ENCODE measurements at regions of chr19 and their contacts with region 1.

Region 1: GRCh38 chr19:11422163-11423021 is 3.3 kb upstream of the RGL3 start:
- DNase-seq: peak; percentile 92 to 98
- H3K4me3 ChIP-seq: peak overlapping the region; percentile 49
- H3K27ac ChIP-seq: peak overlapping the region; percentile 47
- H3K4me1 ChIP-seq: peaks cover 23% of the 10 kb centered on the region
- H3K27me3 ChIP-seq: no peaks in the 10 kb centered on the region
- CTCF ChIP-seq: no peak

Region 2: DNA sequence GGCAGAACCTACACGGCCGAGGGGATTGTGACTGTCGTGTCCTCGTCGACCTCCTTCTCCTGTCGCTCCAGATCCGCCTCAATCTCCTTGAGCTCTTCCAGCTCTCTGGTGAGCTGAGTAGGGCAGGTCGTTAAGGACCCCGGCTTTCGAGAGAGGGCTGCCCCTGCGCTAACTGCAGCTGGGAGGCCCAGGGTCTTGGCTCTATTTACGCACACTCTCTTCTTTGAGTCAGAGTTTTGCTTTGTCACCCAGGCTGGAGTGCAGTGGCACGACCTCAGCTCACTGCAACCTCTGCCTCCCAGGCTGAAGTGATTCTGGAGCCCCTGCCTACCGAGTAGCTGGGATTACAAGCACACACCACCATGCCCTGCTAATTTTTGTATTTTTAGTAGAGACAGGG is 274.4 kb before region 1 on chr19:
- CTCF ChIA-PET with region 1: no interaction called
- POLR2A ChIA-PET with region 1: no interaction called
- intact Hi-C with region 1: no loop called
- DNase-seq: peak in 1 of 2 experiments; percentile 24
- H3K4me3 ChIP-seq: no peak overlapping the region
- H3K27ac ChIP-seq: no peak overlapping the region
- H3K4me1 ChIP-seq: peaks cover 23% of the 10 kb centered on the region
- H3K27me3 ChIP-seq: no peaks in the 10 kb centered on the region
- CTCF ChIP-seq: no peak

Region 3: DNA sequence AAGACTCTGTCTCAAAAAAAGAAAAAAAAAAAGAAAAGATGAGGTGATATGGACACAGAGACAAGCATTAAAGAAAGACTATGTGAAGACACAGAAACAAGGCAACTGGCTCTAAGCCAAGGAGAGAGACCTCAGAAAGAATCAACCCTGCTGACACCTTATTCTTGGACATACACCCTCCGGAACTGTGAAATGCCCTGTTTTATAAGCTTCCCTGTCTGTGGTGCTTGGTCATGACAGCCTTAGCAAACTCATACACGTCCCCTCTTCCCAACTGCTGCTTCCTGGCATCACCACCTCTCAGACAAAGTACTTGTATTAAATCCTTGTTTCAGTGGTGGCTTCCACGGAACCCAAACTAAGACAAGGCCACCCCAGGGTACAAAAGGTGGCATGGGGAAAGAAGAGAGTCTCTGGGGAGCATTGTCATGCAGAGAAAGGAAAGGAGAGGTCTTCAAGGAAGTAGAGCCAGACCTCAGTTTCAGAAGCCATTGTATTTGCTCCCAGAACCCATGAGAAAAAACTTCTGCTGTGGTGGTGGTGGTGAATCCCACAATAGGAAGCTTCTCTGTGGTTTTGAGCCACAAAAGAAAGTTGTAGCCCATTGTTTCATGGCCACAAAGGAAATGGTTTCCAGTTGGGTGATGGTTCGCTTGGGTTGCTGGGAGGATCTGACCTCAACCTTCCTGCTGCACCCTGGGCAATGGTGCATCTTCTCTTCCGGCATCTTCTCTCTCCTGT is 142.7 kb before region 1 on chr19:
- CTCF ChIA-PET with region 1: interaction called, 10 read pairs
- POLR2A ChIA-PET with region 1: no interaction called
- intact Hi-C with region 1: no loop called
- DNase-seq: no peak
- H3K4me3 ChIP-seq: no peak overlapping the region
- H3K27ac ChIP-seq: no peak overlapping the region
- H3K4me1 ChIP-seq: no peaks in the 10 kb centered on the region
- H3K27me3 ChIP-seq: no peaks in the 10 kb centered on the region; the same call in 1 of the 2 replicates
- CTCF ChIP-seq: no peak

Region 4: GRCh38 chr19:11346092-11346940 is 76.1 kb before region 1 on chr19 and contains the starts of genes CCDC159 and TMEM205:
- CTCF ChIA-PET with region 1: interaction called, 8 read pairs
- POLR2A ChIA-PET with region 1: interaction called, 20 read pairs
- intact Hi-C with region 1: no loop called
- DNase-seq: peak; percentile 98 to 99
- H3K4me3 ChIP-seq: peak within 1 kb of the TSS; percentile 90
- H3K27ac ChIP-seq: peak within 1 kb of the TSS; percentile 67
- H3K4me1 ChIP-seq: peaks cover 36% of the 10 kb centered on the region
- H3K27me3 ChIP-seq: no peaks in the 10 kb centered on the region
- CTCF ChIP-seq: no peak
- total RNA-seq, gene CCDC159: 9.4 and 13.7 TPM in 2 replicates
- total RNA-seq, gene TMEM205: 80.3 and 90.6 TPM in 2 replicates

Region 5: GRCh38 chr19:11374433-11375142 is 47.8 kb before region 1 on chr19 and contains the start of gene SWSAP1:
- CTCF ChIA-PET with region 1: interaction called, 3 read pairs
- POLR2A ChIA-PET with region 1: interaction called, 4 read pairs
- intact Hi-C with region 1: loop called (anchors 5 kb)
- DNase-seq: peak; percentile 97 to 99
- H3K4me3 ChIP-seq: peak within 1 kb of the TSS; percentile 62
- H3K27ac ChIP-seq: peak within 1 kb of the TSS; percentile 75
- H3K4me1 ChIP-seq: peaks cover 44% of the 10 kb centered on the region
- H3K27me3 ChIP-seq: no peaks in the 10 kb centered on the region
- CTCF ChIP-seq: no peak
- total RNA-seq, gene SWSAP1: 4.6 and 4.8 TPM in 2 replicates

Region 6: DNA sequence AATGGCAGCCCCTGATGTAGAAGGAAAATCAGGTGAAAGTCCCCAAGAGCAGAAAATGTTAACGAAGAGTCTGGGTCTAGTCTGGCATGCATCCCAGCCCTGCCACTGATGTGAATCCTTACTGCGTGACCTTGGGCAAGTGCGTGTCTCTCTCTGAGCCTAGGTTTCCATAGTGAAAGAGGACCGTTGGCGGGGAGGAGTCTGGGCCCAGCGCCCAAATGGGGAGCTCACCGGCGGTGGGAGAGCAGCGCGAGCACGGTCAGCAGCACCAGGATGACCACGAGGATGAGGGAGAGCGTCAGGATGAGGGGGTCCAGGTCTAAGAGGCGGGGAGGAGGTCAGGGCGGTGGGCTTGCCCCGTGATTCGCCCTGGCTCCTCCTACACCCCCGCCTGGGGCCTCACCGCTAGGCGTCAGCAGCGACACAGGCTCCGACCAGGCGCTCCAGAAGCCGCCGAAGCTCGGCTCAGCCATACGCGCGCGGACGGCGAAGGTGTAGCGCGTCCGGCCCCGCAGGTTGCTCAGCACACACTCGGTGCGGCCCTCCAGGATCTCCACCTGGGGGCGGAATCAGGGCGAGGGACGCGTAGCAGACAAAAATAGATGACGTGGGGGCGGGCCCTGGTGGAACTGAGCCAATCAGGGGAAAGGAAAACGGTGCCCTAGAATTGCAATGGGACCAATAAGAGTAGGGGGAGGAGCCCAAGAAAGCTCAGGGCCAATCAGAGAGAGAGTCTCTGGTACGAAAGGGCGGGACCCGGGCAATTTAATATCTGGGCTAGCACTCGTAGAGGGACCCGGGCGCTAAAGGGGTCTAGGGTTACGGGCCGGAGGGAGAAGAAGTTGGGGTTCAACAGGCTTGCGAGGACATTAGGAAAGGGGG is 41.5 kb before region 1 on chr19:
- CTCF ChIA-PET with region 1: interaction called, 27 read pairs
- POLR2A ChIA-PET with region 1: interaction called, 3 read pairs
- intact Hi-C with region 1: loop called (anchors 5 kb)
- DNase-seq: peak; percentile 85 to 91
- H3K4me3 ChIP-seq: peak overlapping the region; percentile 38; the same call in 1 of the 2 replicates
- H3K27ac ChIP-seq: no peak overlapping the region
- H3K4me1 ChIP-seq: peaks cover 66% of the 10 kb centered on the region
- H3K27me3 ChIP-seq: no peaks in the 10 kb centered on the region
- CTCF ChIP-seq: peak; percentile 70

Region 7: GRCh38 chr19:11435058-11435832 is 12.9 kb after region 1 on chr19 and contains the starts of genes ODAD3 and PRKCSH:
- CTCF ChIA-PET with region 1: no interaction called
- POLR2A ChIA-PET with region 1: interaction called, 6 read pairs
- intact Hi-C with region 1: loop called (anchors 1 kb)
- DNase-seq: peak; percentile 99
- H3K4me3 ChIP-seq: peak within 1 kb of the TSS; percentile 76
- H3K27ac ChIP-seq: peak within 1 kb of the TSS; percentile 67
- H3K4me1 ChIP-seq: peaks cover 14% of the 10 kb centered on the region
- H3K27me3 ChIP-seq: no peaks in the 10 kb centered on the region
- CTCF ChIP-seq: peak; percentile 96
- total RNA-seq, gene ODAD3: 0.15 and 0.39 TPM in 2 replicates
- total RNA-seq, gene PRKCSH: 410 and 412 TPM in 2 replicates

Region 8: DNA sequence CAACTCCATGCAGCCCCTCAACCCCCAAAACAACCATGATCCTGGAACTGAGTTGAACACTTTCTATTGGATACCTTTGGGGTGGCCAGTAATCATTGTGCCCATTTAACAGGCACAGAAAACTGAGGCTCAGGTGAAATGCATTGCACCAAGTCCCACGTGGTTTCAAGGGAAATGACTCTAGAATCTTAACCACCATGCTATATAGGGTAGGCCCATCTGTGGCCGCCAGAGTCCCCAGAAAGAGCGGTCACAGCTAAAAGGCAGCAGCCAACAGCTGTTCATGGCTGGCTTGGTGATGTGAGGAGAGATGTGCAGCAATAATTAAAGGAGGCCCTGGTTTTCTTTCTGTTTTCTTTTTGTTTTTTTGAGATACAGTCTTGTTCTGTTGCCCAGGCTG is 118.8 kb after region 1 on chr19:
- CTCF ChIA-PET with region 1: no interaction called
- POLR2A ChIA-PET with region 1: interaction called, 20 read pairs
- intact Hi-C with region 1: no loop called
- DNase-seq: no peak
- H3K4me3 ChIP-seq: no peak overlapping the region
- H3K27ac ChIP-seq: no peak overlapping the region
- H3K4me1 ChIP-seq: no peaks in the 10 kb centered on the region
- H3K27me3 ChIP-seq: no peaks in the 10 kb centered on the region
- CTCF ChIP-seq: no peak

Region 9: DNA sequence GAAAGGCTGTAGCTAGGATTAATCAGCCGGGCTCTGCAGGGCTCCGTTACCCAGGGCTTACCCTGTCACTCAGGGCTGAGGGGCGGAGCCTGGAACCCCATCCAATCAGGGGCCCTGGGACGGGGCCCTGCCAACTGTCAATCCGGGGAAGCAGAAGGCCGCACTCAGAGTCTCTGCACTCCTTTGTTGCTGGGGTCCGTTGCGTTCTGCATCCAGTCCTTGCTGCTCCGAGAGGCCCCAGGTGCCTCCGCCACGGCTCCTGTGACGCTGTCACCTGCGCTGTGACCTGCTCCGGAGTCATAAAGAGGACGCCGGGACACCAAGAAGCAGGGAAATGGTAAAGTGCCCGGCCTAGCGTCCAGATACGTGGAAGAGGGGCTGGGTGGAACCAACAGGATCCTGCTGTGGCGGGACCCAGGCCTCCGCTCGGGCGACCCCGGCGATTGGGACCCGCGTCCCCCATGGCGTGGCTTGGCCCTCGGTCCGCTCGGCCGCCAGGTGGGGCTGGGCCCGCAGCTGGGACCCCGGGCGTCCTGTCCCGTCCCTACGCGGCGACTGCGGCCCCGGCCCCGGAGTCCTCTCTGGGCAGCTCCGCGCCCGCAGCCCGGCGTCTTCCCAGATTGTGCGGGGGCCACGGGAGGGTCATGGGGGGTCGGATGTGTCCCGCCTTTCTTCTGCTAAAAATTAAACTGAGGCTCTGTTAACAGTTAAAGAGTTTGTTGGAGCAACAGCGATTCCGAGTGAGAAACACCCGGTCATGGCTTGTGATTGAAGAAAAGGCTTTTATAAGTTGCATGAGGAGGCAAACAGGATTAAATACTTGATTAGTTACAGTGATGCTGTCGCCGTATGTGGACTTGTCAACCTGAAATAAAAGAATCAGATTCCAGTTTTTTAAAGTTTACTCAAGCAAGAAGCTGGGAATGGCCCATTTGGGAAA is 376.3 kb after region 1 on chr19 and contains the start of gene ZNF491:
- CTCF ChIA-PET with region 1: no interaction called
- POLR2A ChIA-PET with region 1: no interaction called
- intact Hi-C with region 1: no loop called
- DNase-seq: peak in 1 of 2 experiments; percentile 69
- H3K4me3 ChIP-seq: peak within 1 kb of the TSS; percentile 19; the same call in 1 of the 2 replicates
- H3K27ac ChIP-seq: no peak within 1 kb of the TSS
- H3K4me1 ChIP-seq: no peaks in the 10 kb centered on the region
- H3K27me3 ChIP-seq: no peaks in the 10 kb centered on the region
- CTCF ChIP-seq: no peak
- total RNA-seq, gene ZNF491: not detected in 2 replicates